ENCODE measurements at regions of chr19 and their contacts with region 1.

Region 1: DNA sequence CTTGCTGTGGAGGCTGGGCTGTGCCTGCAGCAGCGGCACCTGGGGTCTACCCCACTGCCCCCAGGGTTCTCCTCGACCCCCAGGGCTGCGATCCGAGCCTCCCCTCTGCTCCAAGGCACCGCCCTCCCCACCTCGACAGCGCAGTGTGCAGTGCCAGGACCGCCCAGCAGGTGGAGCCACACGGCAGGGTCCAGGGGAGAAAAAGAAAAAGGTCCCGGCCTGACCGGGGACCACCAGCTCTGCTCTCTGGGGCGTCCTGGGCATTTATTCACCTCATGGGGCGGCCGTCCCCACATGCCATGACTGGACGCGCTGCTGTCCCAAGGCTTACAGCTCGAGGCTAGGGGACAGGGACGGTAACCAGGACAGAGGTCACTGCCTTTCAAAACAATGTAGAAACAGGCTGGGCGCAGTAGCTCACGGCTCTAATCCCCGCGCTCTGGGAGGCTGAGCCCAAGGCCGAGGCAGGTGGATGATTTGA is 10.6 kb downstream of the REXO1 start:
- DNase-seq: peak; percentile 44
- H3K4me3 ChIP-seq: no peak overlapping the region
- H3K27ac ChIP-seq: no peak overlapping the region
- H3K4me1 ChIP-seq: peaks cover 16% of the 10 kb centered on the region
- H3K27me3 ChIP-seq: no peaks in the 10 kb centered on the region
- CTCF ChIP-seq: peak; percentile 92 to 97
- POLR2A ChIP-seq: no peak

Region 2: DNA sequence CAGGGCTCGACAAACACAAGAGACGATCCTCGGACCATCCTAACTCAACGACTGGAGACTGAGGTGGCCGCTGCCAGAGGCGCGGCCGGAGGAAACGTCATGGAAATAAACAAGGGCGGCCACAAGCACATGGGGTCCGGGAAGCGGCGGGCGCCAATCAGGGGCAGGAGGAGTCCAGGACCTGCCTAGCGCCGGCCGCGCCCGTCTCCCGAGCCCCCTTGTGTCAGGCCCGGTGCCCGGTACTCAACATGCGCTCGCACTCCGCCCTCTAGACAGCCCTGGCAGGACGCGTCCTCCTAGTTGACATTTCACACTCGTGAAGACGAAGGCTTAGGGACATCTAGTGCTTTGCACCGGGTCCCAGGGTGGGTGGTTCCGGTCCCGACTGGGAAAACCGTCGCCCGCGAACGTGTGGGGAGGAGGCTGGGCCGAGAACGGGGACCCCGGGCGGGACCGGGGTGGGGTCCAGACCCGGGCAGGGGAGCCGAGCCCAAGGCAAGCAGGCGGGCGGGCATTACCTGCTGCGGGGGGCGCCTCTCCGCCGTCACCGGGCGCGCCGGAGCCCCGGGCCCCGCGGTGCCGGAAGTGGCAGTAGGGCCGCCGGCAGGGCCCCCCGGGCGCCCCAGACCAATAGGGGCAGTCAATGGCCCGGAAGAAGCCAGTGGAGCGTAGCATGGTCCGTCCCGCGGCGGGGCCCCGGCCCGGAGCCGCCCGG is 10.2 kb after region 1 on chr19:
- CTCF ChIA-PET with region 1: interaction called, 10 read pairs
- POLR2A ChIA-PET with region 1: no interaction called
- dilution Hi-C with region 1: no loop called
- intact Hi-C with region 1: no loop called
- DNase-seq: peak; percentile 64
- H3K4me3 ChIP-seq: peak overlapping the region; percentile 47 to 76 (median 67)
- H3K27ac ChIP-seq: peak overlapping the region; percentile 99
- H3K4me1 ChIP-seq: peaks cover 8% of the 10 kb centered on the region
- H3K27me3 ChIP-seq: no peaks in the 10 kb centered on the region
- CTCF ChIP-seq: no peak
- POLR2A ChIP-seq: no peak

Region 3: GRCh38 chr19:1856698-1857603 is 19.3 kb after region 1 on chr19:
- CTCF ChIA-PET with region 1: interaction called, 14 read pairs
- POLR2A ChIA-PET with region 1: no interaction called
- dilution Hi-C with region 1: no loop called
- intact Hi-C with region 1: no loop called
- DNase-seq: peak; percentile 76
- H3K4me3 ChIP-seq: peak overlapping the region in 2 of 3 experiments; percentile 8 to 17
- H3K27ac ChIP-seq: peak overlapping the region; percentile 52
- H3K4me1 ChIP-seq: peaks cover 51% of the 10 kb centered on the region
- H3K27me3 ChIP-seq: no peaks in the 10 kb centered on the region
- CTCF ChIP-seq: no peak
- POLR2A ChIP-seq: peak; percentile 17

Region 4: DNA sequence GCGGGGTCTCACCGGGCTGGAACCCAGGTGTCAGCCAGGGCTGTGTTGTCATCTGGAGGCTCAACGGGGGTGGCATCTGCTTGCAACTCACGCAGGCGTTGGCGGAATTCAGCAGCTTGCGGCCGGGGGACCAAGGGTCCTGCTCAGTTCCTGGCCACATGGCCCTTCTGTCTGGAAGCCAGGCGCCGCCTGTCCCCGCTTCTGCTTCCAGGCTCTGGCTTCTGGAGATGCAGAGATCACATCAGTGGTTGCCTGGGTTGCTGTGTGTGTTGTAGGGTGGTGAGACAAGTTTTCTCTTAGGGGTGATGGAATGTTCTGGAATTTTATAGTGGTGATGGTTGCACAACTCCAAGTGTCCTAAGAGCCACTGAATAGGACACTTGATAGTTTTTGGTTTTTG is 72.5 kb after region 1 on chr19:
- CTCF ChIA-PET with region 1: no interaction called
- POLR2A ChIA-PET with region 1: no interaction called
- dilution Hi-C with region 1: no loop called
- intact Hi-C with region 1: no loop called
- DNase-seq: no peak
- H3K4me3 ChIP-seq: no peak overlapping the region
- H3K27ac ChIP-seq: no peak overlapping the region
- H3K4me1 ChIP-seq: no peaks in the 10 kb centered on the region
- H3K27me3 ChIP-seq: no peaks in the 10 kb centered on the region
- CTCF ChIP-seq: no peak
- POLR2A ChIP-seq: no peak

Region 5: DNA sequence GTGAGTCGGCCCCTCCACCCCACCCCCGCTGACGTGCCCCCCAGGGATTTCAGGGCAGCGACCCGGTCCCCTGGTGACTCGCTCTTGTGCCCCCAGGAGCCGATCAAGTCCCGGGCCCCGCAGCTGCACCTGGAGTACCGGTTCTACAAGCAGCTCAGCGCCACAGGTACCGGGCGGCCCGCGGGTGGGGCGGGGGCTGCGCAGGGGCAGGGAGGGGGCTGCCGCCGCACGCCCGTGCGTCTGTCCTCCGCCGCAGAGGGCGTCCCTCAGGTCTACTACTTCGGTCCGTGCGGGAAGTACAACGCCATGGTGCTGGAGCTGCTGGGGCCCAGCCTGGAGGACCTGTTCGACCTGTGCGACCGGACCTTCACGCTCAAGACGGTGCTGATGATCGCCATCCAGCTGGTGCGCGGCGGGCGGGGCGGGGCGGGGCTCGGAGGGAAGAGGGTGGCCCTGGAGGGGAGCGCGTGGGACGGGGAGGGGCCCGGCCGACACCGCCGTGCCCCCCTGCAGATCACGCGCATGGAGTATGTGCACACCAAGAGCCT is 140.8 kb after region 1 on chr19:
- CTCF ChIA-PET with region 1: no interaction called
- POLR2A ChIA-PET with region 1: no interaction called
- dilution Hi-C with region 1: no loop called
- intact Hi-C with region 1: no loop called
- DNase-seq: no peak
- H3K4me3 ChIP-seq: no peak overlapping the region
- H3K27ac ChIP-seq: no peak overlapping the region
- H3K4me1 ChIP-seq: no peaks in the 10 kb centered on the region
- H3K27me3 ChIP-seq: no peaks in the 10 kb centered on the region
- CTCF ChIP-seq: no peak
- POLR2A ChIP-seq: no peak

Region 6: GRCh38 chr19:1992759-1993260 is 155.1 kb after region 1 on chr19:
- CTCF ChIA-PET with region 1: no interaction called
- POLR2A ChIA-PET with region 1: no interaction called
- dilution Hi-C with region 1: no loop called
- intact Hi-C with region 1: no loop called
- DNase-seq: no peak
- H3K4me3 ChIP-seq: no peak overlapping the region
- H3K27ac ChIP-seq: no peak overlapping the region
- H3K4me1 ChIP-seq: no peaks in the 10 kb centered on the region
- H3K27me3 ChIP-seq: no peaks in the 10 kb centered on the region
- CTCF ChIP-seq: no peak
- POLR2A ChIP-seq: no peak